Heart right ventricle (tissue), 16 donors: ENCODE measurements at regions of chr11 and their contacts with region 1.

Region 1: DNA sequence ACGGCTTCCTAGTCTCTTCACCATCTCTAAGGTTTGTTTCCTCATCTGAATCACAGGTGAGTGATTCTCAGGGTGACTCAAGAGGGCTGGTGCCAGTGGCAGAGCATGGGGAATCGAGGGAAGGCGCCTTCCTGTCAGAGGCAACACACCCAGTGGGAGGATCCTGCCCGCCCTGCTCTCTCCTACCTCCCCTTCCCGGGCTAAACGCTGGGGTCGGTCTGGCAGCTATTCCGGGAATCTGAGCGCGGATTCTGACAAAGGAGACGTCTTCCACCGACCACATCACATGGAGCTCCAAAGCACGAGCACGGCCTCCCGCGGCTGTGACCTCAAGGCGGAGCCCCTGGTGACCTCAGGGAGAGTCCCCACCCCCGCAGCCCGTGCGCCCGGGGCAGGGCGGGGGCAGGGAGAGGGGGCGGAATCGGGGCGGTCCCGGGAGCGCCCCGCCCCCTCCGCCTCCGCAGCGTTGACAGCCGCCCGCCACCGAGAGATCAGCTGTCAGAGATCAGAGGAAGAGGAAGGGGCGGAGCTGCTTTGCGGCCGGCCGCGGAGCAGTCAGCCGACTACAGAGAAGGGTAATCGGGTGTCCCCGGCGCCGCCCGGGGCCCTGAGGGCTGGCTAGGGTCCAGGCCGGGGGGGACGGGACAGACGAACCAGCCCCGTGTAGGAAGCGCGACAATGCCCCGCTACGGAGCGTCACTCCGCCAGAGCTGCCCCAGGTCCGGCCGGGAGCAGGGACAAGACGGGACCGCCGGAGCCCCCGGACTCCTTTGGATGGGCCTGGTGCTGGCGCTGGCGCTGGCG is at the start of gene SMPD1:
- DNase-seq: peak; percentile 94
- ATAC-seq: peak; percentile 98 to 99 (median 98)
- H3K4me3 ChIP-seq: peak within 1 kb of the TSS; percentile 66 to 98 (median 80)
- H3K27ac ChIP-seq: peak within 1 kb of the TSS; percentile 66 to 98 (median 90)
- H3K4me1 ChIP-seq: peaks cover 5 to 28% (median 22%) of the 10 kb centered on the region in 9 donors
- H3K27me3 ChIP-seq: no peaks in the 10 kb centered on the region
- CTCF ChIP-seq: no peak
- total RNA-seq, gene SMPD1: 57.4 to 88.1 (median 67.6) TPM

Region 2: DNA sequence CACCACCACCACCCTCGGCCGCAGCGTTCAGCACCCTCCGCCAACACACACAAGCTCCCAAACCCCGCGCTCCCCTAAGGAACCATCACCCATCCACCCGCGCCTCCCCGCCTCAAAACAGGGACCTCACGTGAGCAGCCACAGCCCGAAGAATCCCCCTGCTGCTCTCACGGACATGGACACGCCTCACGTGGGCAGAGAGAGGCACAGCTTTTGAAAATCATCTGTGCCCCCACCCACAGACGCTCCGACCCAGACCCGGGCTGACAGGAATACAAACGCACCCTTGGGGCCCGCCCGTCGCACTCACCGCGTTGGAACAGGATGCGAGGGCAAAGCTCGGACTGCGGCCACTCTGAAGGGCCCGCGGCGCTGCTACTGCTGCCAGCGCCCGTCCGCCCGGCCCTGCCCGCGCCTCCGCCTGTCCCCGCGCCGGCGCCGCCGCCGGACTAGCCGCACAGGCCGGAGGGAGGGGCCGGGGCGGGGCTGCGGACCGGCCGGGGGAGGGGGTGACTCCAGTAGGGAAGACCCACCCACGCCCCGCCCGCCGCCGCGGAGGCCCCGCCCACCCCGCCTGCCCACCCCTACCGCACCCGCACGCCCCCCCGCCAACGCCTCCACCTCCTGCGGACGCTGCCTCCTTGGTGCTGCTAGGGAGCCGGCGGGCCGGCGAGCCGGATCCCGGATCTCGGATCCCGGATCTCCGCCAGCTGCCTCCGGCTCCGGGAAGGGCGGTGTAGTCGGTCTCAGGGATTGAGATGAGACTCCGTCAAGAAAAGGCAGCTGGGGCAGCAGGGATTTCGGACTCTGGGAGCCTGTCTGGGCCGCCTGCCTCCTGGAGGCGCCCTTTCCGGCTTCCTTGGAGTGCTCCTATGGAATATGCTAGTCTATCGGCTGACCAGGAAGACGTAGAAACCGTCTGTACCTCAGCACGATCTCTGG is 83.6 kb after region 1 on chr11 and contains the start of gene TRIM3:
- intact Hi-C with region 1: loop called in 1 of 10 experiments (anchors 1 kb)
- DNase-seq: peak; percentile 95 to 97
- ATAC-seq: peak; percentile 84 to 95 (median 90)
- H3K4me3 ChIP-seq: peak within 1 kb of the TSS; percentile 54 to 97 (median 90)
- H3K27ac ChIP-seq: peak within 1 kb of the TSS; percentile 74 to 98 (median 94)
- H3K4me1 ChIP-seq: peaks cover 0 to 39% (median 27%) of the 10 kb centered on the region in 9 donors
- H3K27me3 ChIP-seq: no peaks in the 10 kb centered on the region
- CTCF ChIP-seq: peak in 4 of 9 donors; percentile 22 to 44 (median 32)
- total RNA-seq, gene TRIM3: 6.3 to 12.7 (median 8.7) TPM

Region 3: GRCh38 chr11:6705905-6706535 is 315.9 kb after region 1 on chr11:
- intact Hi-C with region 1: loop called in 2 of 10 experiments (anchors 10 kb)
- DNase-seq: peak in 1 of 2 donors; percentile 56
- ATAC-seq: peak in 7 of 8 donors; percentile 30 to 73 (median 56)
- H3K4me3 ChIP-seq: no peak overlapping the region
- H3K27ac ChIP-seq: peak overlapping the region in 8 of 10 donors; percentile 3 to 66 (median 36)
- H3K4me1 ChIP-seq: peaks cover 0 to 36% (median 23%) of the 10 kb centered on the region in 9 donors
- H3K27me3 ChIP-seq: no peaks in the 10 kb centered on the region
- CTCF ChIP-seq: peak; percentile 87 to 98 (median 94)